Activated CD4-positive, alpha-beta T cell treated with anti-CD3 and anti-CD28 coated beads, Interleukin-2, amount 10 ng/mL, durations not matched to agents 24 days and 14 days (primary cell): ENCODE measurements at regions of chrX and their contacts with region 1.

Region 1: DNA sequence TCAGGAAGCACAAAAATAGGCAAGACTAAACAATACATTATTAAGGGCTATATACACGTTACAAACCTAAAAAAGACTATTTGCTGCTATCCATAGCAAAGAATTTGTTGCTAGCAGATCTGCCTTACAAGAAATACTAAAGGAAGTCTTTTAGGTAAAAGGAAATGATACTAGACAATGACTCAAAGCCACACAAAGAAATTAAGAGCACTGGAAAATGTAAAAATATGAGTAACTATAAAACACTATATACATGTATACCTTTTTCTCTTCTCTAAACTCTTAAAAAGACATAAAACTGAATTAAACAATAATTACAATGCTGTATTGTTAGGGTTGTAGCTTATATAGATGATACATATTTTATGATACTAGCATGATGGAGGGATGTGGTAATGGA is 25.7 kb downstream of the SLC9A7 start:
- DNase-seq: no peak
- H3K4me3 Mint-ChIP-seq: no peak overlapping the region
- H3K27ac Mint-ChIP-seq: peak overlapping the region; percentile 63
- H3K4me1 Mint-ChIP-seq: peaks cover 18% of the 10 kb centered on the region
- H3K27me3 Mint-ChIP-seq: no peaks in the 10 kb centered on the region

Region 2: GRCh38 chrX:46704767-46705386 is 28.3 kb before region 1 on chrX:
- intact Hi-C with region 1: loop called (anchors 2 kb)
- DNase-seq: peak; percentile 78
- H3K4me3 Mint-ChIP-seq: peak overlapping the region; percentile 82
- H3K27ac Mint-ChIP-seq: peak overlapping the region; percentile 99
- H3K4me1 Mint-ChIP-seq: peaks cover 46% of the 10 kb centered on the region
- H3K27me3 Mint-ChIP-seq: no peaks in the 10 kb centered on the region